Activated naive CD4-positive, alpha-beta T cell treated with anti-CD3 and anti-CD28 coated beads for 36 hours (primary cell): ENCODE measurements at regions of chr6 and their contacts with region 1.

Region 1: DNA sequence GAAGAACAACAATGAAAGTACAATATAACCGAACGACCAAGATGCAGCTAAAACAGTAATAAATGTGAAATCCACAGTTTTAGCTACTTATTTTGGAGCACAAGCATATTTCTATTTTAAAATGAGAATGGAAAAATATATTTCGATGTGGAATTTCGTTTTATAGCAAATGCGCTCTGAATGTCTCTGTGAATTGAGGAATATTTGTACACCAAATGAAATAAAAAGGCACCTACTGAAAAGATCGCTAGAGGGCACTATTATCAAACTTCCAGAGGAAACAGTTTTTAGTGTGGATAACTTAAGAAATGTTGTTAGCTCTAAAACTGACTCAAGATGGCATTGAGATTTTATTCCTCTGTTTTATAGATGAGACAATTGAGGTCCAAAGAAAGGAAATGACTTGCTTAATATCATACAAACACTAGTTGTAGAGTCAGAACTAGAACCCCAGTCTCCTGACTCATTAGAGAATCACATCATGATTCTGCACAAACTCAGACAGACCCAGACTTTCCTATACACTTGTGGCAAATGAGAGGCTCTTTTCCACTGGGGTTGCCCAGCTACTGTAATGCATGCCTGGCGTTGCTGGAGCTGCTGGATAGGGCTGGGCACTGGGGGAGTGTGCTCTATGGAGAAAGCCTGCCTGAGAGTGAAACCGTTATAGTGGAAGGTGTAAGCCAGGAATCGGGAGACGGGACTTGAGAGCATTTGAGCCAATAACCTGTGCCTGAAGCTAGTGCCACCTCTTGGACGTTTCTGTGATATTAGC is 51.9 kb downstream of the GCLC start:
- DNase-seq: peak; percentile 45
- H3K4me3 Mint-ChIP-seq: no peak overlapping the region
- H3K27ac Mint-ChIP-seq: no peak overlapping the region
- H3K4me1 Mint-ChIP-seq: peaks cover 10% of the 10 kb centered on the region
- H3K27me3 Mint-ChIP-seq: peaks cover 16% of the 10 kb centered on the region

Region 2: GRCh38 chr6:53233309-53233708 is 259.7 kb before region 1 on chr6:
- CTCF ChIA-PET with region 1: no interaction called
- intact Hi-C with region 1: loop called (anchors 5 kb)
- DNase-seq: no peak
- H3K4me3 Mint-ChIP-seq: no peak overlapping the region
- H3K27ac Mint-ChIP-seq: no peak overlapping the region
- H3K4me1 Mint-ChIP-seq: peaks cover 24% of the 10 kb centered on the region
- H3K27me3 Mint-ChIP-seq: no peaks in the 10 kb centered on the region

Region 3: DNA sequence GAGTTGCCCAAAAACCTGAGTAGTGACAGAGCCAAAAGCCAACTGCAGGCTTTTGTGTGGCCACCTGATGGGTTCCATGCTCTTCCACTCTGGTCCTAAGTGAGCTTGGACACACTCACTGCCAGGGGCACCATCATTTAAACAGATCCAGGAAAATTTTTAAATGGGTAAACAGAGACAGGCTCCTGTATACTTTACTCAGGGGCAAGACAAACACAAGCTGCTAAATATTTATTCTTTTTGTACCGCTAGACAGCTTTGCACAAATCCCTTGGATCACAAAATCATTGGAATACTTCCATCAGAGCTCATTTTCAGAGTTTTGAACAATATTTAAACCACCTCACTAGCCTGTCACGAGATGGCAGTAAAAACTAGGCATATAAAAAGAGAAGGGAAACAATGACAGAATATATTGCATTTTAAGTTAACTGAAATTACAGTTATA is 20.5 kb after region 1 on chr6:
- CTCF ChIA-PET with region 1: interaction called, 15 read pairs
- intact Hi-C with region 1: loop called (anchors 1 kb)
- DNase-seq: no peak
- H3K4me3 Mint-ChIP-seq: no peak overlapping the region
- H3K27ac Mint-ChIP-seq: no peak overlapping the region
- H3K4me1 Mint-ChIP-seq: no peaks in the 10 kb centered on the region
- H3K27me3 Mint-ChIP-seq: no peaks in the 10 kb centered on the region

Region 4: DNA sequence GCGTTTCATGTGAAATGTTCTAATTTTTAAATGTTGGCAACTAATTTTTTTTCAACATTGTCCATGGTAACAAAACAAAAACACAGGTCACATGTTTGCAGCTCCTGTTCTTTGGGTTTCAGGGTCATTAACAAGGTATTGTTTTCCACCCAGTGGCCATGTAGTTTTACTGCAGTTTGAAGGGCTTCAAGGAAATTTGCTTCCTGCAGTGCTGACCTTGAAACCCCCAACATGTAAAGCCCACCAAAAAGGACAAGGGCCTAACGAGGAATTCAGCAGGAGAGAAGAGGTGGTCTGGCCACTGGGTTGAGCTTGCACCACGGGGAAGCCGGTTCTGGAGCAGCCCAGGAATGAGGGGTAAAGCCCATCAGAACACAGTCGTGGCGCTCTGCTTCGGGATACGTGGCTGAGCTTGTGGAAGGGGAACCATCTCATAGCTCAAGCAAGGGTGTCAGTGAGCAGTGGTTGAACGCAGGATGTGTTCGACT is 186.4 kb after region 1 on chr6:
- CTCF ChIA-PET with region 1: interaction called, 3 read pairs
- intact Hi-C with region 1: loop called (anchors 1 kb)
- DNase-seq: no peak
- H3K4me3 Mint-ChIP-seq: no peak overlapping the region
- H3K27ac Mint-ChIP-seq: no peak overlapping the region
- H3K4me1 Mint-ChIP-seq: no peaks in the 10 kb centered on the region
- H3K27me3 Mint-ChIP-seq: no peaks in the 10 kb centered on the region

Region 5: GRCh38 chr6:53956068-53956711 is 463.1 kb after region 1 on chr6:
- CTCF ChIA-PET with region 1: no interaction called
- intact Hi-C with region 1: loop called (anchors 10 kb)
- DNase-seq: peak; percentile 46
- H3K4me3 Mint-ChIP-seq: no peak overlapping the region
- H3K27ac Mint-ChIP-seq: no peak overlapping the region
- H3K4me1 Mint-ChIP-seq: no peaks in the 10 kb centered on the region
- H3K27me3 Mint-ChIP-seq: peaks cover 2% of the 10 kb centered on the region